CD4-positive, alpha-beta T cell (primary cell): ENCODE measurements at regions of chr3 and their contacts with region 1.

Region 1: DNA sequence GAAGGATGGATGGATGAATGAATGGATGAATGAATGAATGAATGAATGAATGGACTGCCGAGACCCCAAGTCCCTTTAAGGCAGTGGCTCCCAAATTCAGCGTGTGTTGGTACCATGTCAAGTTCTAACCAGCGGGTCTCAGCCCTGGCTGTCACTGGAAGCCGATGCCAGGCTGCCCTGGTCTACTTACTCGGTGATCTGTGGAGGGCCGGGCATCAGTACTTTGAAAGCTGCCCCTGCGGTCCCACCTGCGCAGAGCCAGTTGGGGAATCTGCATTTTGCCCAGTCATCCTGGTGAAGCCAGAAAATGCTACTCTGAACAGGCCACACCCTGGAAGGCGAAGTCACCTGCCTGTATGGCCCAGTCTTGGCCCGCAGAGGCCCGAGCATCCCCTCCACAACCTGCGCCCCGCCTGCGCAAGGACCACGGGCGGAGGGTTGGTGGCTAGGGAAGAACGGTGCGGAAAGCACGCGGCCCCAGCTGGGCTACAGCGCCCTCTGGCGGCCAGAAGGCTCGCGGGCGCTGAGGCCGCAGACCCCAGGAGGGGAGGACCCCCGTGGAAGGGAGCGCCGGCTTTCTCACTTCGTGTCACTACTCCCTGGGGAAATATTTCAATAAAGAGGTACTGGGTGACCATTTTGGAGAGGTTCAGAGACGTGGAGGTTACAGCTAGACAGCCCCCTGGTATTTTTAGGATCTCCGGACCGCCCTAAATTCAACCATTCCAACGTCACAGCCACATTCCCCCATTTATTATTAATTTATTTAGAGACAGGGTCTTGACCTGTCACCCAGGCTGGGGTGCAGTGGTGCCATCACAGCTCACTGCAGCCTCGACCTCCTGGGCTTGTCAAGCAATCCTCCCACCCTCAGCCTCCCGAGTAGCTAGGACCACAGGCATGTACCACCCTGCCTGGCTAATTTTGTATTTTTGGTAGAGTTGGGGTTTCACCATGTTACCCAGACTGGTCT is 34.9 kb downstream of the PRKCD start:
- DNase-seq: peak; percentile 23 to 80 (median 47)
- ATAC-seq: peak; percentile 67
- H3K4me3 ChIP-seq: no peak overlapping the region
- H3K4me3 Mint-ChIP-seq: no peak overlapping the region
- H3K27ac ChIP-seq: no peak overlapping the region
- H3K27ac Mint-ChIP-seq: no peak overlapping the region
- H3K4me1 ChIP-seq: peaks cover 14% of the 10 kb centered on the region
- H3K4me1 Mint-ChIP-seq: peaks cover 4% of the 10 kb centered on the region
- H3K27me3 ChIP-seq: no peaks in the 10 kb centered on the region
- H3K27me3 Mint-ChIP-seq: no peaks in the 10 kb centered on the region
- CTCF ChIP-seq: peak; percentile 97

Region 2: DNA sequence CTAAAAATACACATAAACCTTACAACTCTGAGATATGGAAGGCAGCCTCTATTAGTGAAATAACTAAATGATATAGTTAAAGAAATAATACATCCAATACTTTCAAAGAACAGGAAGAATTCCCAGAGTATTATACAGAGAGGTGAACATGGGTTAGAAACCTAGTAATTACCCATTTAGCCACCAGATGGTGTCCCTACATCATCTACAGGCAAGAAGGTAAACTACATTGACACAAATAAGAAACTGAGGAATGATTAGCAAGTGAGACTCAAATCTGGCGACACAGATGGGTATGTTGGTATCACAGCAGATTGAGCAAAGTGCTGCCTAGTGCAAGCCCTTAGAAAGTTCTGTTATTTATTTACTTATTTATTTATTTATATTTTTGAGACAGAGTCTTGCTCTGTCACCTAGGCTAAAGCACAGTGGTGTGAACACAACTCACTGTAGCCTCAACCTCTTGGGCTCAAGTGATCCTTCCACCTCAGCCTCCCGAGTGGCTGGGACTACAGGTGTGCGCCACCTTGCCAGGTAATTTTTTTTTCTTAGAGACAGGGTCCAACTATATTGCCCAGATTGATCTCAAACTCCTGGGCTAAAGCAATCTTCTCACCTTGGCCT is 453.4 kb before region 1 on chr3:
- CTCF ChIA-PET with region 1: no interaction called
- POLR2A ChIA-PET with region 1: no interaction called
- intact Hi-C with region 1: loop called (anchors 5 kb)
- DNase-seq: peak in 3 of 14 experiments; percentile 39 to 57 (median 54)
- ATAC-seq: peak; percentile 46
- H3K4me3 ChIP-seq: no peak overlapping the region
- H3K4me3 Mint-ChIP-seq: no peak overlapping the region
- H3K27ac ChIP-seq: no peak overlapping the region
- H3K27ac Mint-ChIP-seq: no peak overlapping the region
- H3K4me1 ChIP-seq: no peaks in the 10 kb centered on the region
- H3K4me1 Mint-ChIP-seq: no peaks in the 10 kb centered on the region
- H3K27me3 ChIP-seq: no peaks in the 10 kb centered on the region
- H3K27me3 Mint-ChIP-seq: no peaks in the 10 kb centered on the region
- CTCF ChIP-seq: peak; percentile 72

Region 3: DNA sequence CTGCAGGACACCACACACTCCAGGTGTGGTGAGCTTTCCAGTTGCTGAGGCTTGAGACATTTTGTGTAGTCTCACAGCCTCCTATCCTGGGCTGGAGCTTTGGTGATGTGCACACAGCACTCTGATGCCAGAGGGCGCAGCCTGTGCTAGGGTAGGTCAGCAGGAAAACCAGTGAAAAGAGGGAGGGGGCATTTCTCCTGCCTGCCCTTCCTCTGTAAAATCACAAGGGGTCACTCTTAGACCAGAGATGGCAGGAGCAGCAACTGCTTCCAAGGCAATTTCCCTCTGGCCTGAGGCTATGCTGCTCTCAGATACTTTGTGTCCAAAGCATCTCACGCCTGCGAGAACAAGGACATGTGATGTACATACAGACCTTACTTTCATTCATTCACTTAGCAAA is 344.5 kb before region 1 on chr3:
- CTCF ChIA-PET with region 1: no interaction called
- POLR2A ChIA-PET with region 1: no interaction called
- intact Hi-C with region 1: loop called (anchors 5 kb)
- DNase-seq: peak in 5 of 14 experiments; percentile 12 to 62 (median 34)
- ATAC-seq: peak; percentile 69
- H3K4me3 ChIP-seq: no peak overlapping the region
- H3K4me3 Mint-ChIP-seq: no peak overlapping the region
- H3K27ac ChIP-seq: no peak overlapping the region
- H3K27ac Mint-ChIP-seq: no peak overlapping the region
- H3K4me1 ChIP-seq: no peaks in the 10 kb centered on the region
- H3K4me1 Mint-ChIP-seq: no peaks in the 10 kb centered on the region
- H3K27me3 ChIP-seq: no peaks in the 10 kb centered on the region
- H3K27me3 Mint-ChIP-seq: no peaks in the 10 kb centered on the region
- CTCF ChIP-seq: peak; percentile 55

Region 4: DNA sequence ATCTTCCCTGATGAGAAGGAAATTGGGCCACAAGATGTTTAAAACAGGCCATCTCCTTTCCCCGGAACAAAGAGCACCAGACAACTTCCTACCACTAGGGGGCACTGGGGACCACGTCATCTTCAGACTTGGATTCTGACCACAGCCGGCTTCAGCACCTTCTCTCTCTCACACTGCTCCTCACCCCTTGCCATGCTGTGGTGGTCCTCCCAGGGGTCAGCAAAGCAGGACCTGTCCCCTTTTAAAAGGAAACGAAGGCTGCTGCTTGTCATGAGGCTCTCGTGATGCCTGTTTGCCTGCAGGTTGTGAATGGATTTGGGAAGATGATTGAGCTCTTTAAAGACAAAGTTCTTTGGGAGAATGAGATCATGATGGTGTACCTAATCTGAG is 81.9 kb before region 1 on chr3:
- CTCF ChIA-PET with region 1: interaction called, 45 read pairs
- POLR2A ChIA-PET with region 1: interaction called, 6 read pairs
- intact Hi-C with region 1: loop called (anchors 1 kb)
- DNase-seq: peak; percentile 65 to 90 (median 78)
- ATAC-seq: peak; percentile 71
- H3K4me3 ChIP-seq: no peak overlapping the region
- H3K4me3 Mint-ChIP-seq: no peak overlapping the region
- H3K27ac ChIP-seq: no peak overlapping the region
- H3K27ac Mint-ChIP-seq: no peak overlapping the region
- H3K4me1 ChIP-seq: peaks cover 20% of the 10 kb centered on the region
- H3K4me1 Mint-ChIP-seq: peaks cover 12% of the 10 kb centered on the region
- H3K27me3 ChIP-seq: no peaks in the 10 kb centered on the region
- H3K27me3 Mint-ChIP-seq: no peaks in the 10 kb centered on the region
- CTCF ChIP-seq: peak; percentile 92

Region 5: DNA sequence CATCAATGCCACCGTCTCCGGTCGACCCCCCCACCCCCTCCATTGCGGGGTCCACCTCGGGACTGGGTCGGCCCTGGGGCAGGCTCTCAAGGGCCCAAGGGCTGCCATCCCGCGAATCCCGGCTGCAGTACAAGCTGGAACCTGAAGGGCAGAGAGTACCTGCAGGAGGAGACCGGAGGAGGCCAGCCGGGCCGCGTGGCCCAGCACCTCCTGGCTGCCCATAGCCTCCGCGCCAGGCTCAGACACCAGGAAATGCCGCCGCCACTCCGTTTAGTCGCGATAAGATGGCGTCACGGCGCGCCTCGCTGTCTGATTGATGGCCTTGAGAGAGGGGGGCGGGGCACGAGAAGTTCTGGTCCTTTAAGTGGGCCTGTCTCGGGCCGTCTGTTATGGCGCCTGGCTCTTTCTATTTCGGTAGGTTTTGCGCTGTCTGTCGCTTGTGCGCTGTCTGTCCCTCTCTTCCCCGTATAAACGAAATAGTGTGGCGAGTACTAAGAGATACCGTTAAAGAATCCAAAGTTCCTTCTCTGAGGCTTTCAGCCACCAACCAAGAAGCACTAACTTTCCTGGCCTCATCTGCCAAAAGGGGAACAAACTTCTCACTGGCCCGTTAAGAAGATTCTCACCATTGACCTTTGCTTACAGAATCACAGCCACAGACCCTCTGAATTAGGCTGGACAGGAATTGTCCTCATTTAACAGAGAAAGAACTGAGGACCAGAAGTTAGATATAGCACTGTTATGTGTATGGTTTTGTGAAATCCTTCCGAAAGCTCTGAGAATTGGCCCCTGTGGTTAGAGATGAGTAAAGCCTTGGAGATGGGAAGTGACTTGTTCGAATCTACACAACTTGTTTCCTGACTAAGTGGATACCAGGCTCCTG is 65.5 kb before region 1 on chr3 and contains the start of gene RFT1:
- CTCF ChIA-PET with region 1: interaction called, 18 read pairs
- POLR2A ChIA-PET with region 1: interaction called, 4 read pairs
- intact Hi-C with region 1: loop called in 1 of 2 experiments (anchors 1 kb)
- DNase-seq: peak; percentile 94 to 100 (median 98)
- ATAC-seq: peak; percentile 92
- H3K4me3 ChIP-seq: peak within 1 kb of the TSS; percentile 80
- H3K4me3 Mint-ChIP-seq: peak within 1 kb of the TSS; percentile 92
- H3K27ac ChIP-seq: peak within 1 kb of the TSS; percentile 93 to 95
- H3K27ac Mint-ChIP-seq: peak within 1 kb of the TSS; percentile 98
- H3K4me1 ChIP-seq: peaks cover 31% of the 10 kb centered on the region
- H3K4me1 Mint-ChIP-seq: peaks cover 26% of the 10 kb centered on the region
- H3K27me3 ChIP-seq: no peaks in the 10 kb centered on the region
- H3K27me3 Mint-ChIP-seq: no peaks in the 10 kb centered on the region
- CTCF ChIP-seq: no peak
- total RNA-seq, gene RFT1: 8.5 to 10.2 TPM

Region 6: DNA sequence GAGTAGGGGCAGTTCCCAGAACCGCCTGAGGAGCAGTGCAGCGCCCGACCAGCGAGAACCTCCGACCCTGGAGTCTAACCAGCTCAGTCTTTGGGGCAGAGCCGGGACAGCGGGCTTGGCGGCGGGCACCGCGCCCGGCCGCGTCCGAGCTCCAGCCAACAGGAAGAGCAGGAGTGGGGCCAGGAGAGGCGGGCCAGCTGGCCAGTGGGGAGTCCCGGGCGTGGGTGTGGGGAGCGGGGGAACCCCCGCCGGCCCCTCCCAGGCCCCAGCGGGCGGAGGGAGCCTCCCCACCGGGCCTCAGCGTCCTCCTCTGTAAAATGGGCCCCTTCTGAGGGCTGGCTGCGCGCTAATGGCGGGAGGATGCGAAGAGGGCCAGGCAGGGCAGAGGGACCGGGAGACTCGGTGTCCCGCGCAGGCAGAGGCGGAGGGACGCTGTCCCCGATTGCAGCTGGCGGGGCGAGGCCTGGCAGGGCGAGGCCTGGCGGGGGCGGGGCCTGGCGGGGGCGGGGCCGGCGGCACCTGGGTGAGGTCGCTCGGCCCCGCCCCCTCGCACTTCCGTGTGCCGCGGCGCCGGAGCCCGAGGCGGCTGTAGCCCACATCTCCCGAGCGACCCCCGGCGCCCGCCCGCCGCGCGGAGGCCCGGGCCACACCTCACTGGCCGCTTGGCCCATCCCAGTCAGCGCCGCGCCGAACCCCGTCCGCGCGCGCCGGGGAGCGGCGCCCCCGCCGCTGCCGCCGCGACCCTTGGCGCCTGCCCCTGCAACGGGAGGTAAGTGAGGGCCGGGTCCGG is 35.0 kb before region 1 on chr3 and contains the start of gene PRKCD:
- CTCF ChIA-PET with region 1: no interaction called
- POLR2A ChIA-PET with region 1: no interaction called
- intact Hi-C with region 1: loop called in 1 of 2 experiments (anchors 5 kb)
- DNase-seq: peak; percentile 61 to 94 (median 78)
- ATAC-seq: peak; percentile 78
- H3K4me3 ChIP-seq: peak within 1 kb of the TSS; percentile 98
- H3K4me3 Mint-ChIP-seq: peak within 1 kb of the TSS; percentile 90
- H3K27ac ChIP-seq: peak within 1 kb of the TSS; percentile 47 to 58
- H3K27ac Mint-ChIP-seq: peak within 1 kb of the TSS; percentile 79
- H3K4me1 ChIP-seq: peaks cover 38% of the 10 kb centered on the region
- H3K4me1 Mint-ChIP-seq: peaks cover 22% of the 10 kb centered on the region
- H3K27me3 ChIP-seq: peaks cover 10 to 12% of the 10 kb centered on the region in 2 experiments
- H3K27me3 Mint-ChIP-seq: peaks cover 3% of the 10 kb centered on the region
- CTCF ChIP-seq: peak; percentile 41
- total RNA-seq, gene PRKCD: 18.1 to 20.1 TPM